GM12878 (cell line): ENCODE measurements at regions of chr9 and their contacts with region 1.

Region 1: DNA sequence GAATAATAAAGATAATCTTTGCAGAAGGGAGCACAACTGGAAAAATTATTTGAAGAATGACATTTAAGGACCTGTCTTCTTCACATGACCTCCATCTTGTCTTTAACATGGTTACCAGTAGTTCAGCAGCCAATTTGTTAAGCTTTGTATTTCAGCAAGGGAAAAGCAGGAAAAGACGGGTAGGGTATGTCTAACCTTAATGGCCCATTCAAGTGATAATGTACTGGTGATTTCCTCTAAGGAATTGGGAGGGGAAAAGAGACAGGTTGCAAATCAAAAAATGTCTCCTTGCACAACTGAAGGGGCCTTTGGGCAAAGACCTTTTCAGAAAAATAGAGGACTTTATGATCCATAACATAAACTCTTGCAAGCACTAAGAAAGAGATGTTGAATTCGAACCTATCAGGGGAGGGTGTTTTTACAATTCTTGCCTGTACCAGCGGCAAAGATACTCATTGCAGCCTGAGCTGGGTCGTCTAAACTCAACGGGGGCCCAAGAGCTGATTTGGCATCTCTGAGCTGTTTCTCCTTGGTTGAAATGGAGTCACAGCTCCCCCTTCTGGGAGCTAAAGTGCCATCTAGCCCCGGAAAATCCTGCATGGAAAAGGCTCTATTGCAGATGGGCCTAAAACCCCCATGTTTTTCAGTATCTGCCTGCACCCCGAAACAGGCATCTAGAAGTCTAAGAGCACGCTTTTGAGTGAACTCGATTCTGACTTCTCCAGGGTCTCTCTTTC is 3.8 kb downstream of the BRINP1 start:
- DNase-seq: no peak
- ATAC-seq: 0 out of 3 replicates have a peak, but pooled peaks have one; percentile 31
- H3K4me3 ChIP-seq: no peak overlapping the region
- H3K27ac ChIP-seq: no peak overlapping the region
- H3K4me1 ChIP-seq: no peaks in the 10 kb centered on the region
- H3K27me3 ChIP-seq: peaks cover 0 to 1% of the 10 kb centered on the region in 2 experiments; a peak in 2 of 4 replicates
- CTCF ChIP-seq: peak; percentile 37 to 49 (median 39); a peak in 4 of 6 replicates
- EP300 ChIP-seq: no peak
- POLR2A ChIP-seq: no peak
- RAD21 ChIP-seq: peak; percentile 60

Region 2: GRCh38 chr9:118170032-118170955 is 1195.2 kb before region 1 on chr9:
- CTCF ChIA-PET with region 1: interaction called, 8 read pairs
- POLR2A ChIA-PET with region 1: no interaction called
- RAD21 ChIA-PET with region 1: interaction called, 3 read pairs
- SMC1A ChIA-PET with region 1: no interaction called
- in situ Hi-C with region 1: no loop called
- intact Hi-C with region 1: loop called (anchors 1 kb)
- DNase-seq: no peak
- ATAC-seq: peak; percentile 68
- H3K4me3 ChIP-seq: no peak overlapping the region
- H3K27ac ChIP-seq: no peak overlapping the region
- H3K4me1 ChIP-seq: no peaks in the 10 kb centered on the region
- H3K27me3 ChIP-seq: no peaks in the 10 kb centered on the region
- CTCF ChIP-seq: peak; percentile 50 to 65 (median 63)
- EP300 ChIP-seq: no peak
- POLR2A ChIP-seq: no peak
- RAD21 ChIP-seq: peak; percentile 46